ENCODE measurements at regions of chr4 and their contacts with region 1.

Region 1: DNA sequence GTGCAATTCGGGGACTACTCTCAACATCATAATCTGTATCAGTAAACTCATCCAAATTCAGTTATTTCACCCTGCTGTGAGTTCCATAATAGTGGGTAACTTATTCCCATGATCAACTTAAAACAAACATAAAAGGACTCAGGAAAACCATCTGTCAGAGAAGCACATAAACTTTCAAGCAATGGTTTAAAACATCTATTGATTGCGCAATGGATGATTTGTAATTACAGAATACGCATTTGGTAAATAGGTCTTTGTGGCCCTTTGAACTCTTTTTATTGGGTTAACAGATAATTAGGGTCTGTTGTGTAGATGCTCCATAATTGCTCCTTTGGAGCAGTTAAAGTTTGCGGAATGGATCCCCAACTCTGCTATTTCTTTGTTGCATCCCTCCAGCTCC is 115.3 kb downstream of the KIT start:
- DNase-seq: no peak
- H3K4me3 ChIP-seq: no peak overlapping the region
- H3K27ac ChIP-seq: no peak overlapping the region
- H3K4me1 ChIP-seq: peaks cover 0 to 13% (median 0%) of the 10 kb centered on the region in 4 experiments
- H3K27me3 ChIP-seq: no peaks in the 10 kb centered on the region

Region 2: DNA sequence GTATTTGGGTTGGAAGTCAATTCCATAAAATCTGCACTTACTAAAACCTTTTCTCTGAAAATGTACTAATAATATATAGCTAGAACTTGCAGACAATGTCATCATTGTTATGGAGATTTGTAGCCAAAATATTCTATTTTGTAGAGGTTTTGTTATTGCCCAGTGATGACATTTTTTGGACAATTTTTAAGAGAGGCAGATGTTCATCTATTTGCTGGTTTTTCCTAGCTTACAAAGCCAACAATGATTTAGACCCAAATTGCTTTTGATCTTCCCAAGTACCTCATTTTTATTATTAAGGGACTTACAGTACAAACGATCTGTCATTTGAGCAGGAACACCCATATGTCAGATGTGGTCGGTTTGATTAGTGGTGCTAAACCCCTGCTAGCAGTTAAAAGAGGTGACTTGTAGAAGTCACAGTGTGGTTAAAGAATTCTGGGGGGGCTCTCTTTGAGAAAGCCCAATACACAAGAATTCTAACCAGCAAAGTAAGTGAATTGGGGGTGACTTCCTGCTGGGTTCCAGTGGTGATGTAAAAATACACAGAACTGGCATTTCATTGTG is 20.9 kb after region 1 on chr4:
- CTCF ChIA-PET with region 1: interaction called, 11 read pairs
- POLR2A ChIA-PET with region 1: no interaction called
- DNase-seq: peak; percentile 27 to 91 (median 84)
- H3K4me3 ChIP-seq: no peak overlapping the region
- H3K27ac ChIP-seq: no peak overlapping the region
- H3K4me1 ChIP-seq: peaks cover 2 to 47% (median 39%) of the 10 kb centered on the region in 4 experiments
- H3K27me3 ChIP-seq: no peaks in the 10 kb centered on the region

Measured in common myeloid progenitor, CD34-positive (primary cell).